Calu3 (cell line): ENCODE measurements at regions of chr19 and their contacts with region 1.

Region 1: GRCh38 chr19:28862238-28862637 is 350.7 kb downstream of the UQCRFS1 start:
- DNase-seq: no peak
- H3K4me3 Mint-ChIP-seq: no peak overlapping the region
- H3K27ac Mint-ChIP-seq: no peak overlapping the region
- H3K4me1 Mint-ChIP-seq: peaks cover 18% of the 10 kb centered on the region
- H3K27me3 Mint-ChIP-seq: no peaks in the 10 kb centered on the region
- CTCF ChIP-seq: no peak

Region 2: GRCh38 chr19:28847468-28847867 is 14.8 kb before region 1 on chr19:
- CTCF ChIA-PET with region 1: no interaction called
- intact Hi-C with region 1: loop called (anchors 1 kb)
- DNase-seq: no peak
- H3K4me3 Mint-ChIP-seq: no peak overlapping the region
- H3K27ac Mint-ChIP-seq: no peak overlapping the region
- H3K4me1 Mint-ChIP-seq: no peaks in the 10 kb centered on the region
- H3K27me3 Mint-ChIP-seq: no peaks in the 10 kb centered on the region
- CTCF ChIP-seq: no peak